Activated naive CD4-positive, alpha-beta T cell treated with anti-CD3 and anti-CD28 coated beads for 36 hours (primary cell): ENCODE measurements at regions of chr4 and their contacts with region 1.

Region 1: GRCh38 chr4:16264798-16265197 is 38.5 kb upstream of the TAPT1 start:
- DNase-seq: no peak
- H3K4me3 Mint-ChIP-seq: no peak overlapping the region
- H3K27ac Mint-ChIP-seq: no peak overlapping the region
- H3K4me1 Mint-ChIP-seq: peaks cover 5% of the 10 kb centered on the region
- H3K27me3 Mint-ChIP-seq: no peaks in the 10 kb centered on the region

Region 2: DNA sequence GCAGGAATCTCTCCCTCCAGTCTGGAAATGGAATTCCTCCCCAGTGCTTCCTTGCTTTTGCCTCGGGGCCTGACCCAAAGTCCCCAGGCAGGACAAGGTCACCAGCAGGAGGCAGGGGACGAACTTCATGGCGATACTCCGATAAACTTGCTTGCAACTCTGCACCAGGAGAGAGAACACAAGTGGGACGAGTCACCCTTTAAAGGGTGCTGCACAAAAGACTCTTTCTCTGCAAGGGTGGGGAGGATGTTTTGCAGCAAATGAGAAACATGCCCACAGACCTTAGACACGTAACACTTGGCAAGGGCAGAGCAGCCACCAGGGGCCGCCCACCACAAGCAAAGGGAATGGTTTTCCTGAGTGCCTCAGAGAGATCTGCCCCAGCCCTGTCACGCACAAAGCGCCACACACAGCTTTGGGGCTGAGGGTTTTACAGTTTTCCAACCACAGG is 301.8 kb before region 1 on chr4 and contains the start of gene FGFBP2:
- CTCF ChIA-PET with region 1: interaction called, 4 read pairs
- intact Hi-C with region 1: loop called (anchors 1 kb)
- DNase-seq: peak; percentile 76
- H3K4me3 Mint-ChIP-seq: no peak within 1 kb of the TSS
- H3K27ac Mint-ChIP-seq: no peak within 1 kb of the TSS
- H3K4me1 Mint-ChIP-seq: peaks cover 11% of the 10 kb centered on the region
- H3K27me3 Mint-ChIP-seq: peaks cover 2% of the 10 kb centered on the region
- total RNA-seq, gene FGFBP2: not detected

Region 3: DNA sequence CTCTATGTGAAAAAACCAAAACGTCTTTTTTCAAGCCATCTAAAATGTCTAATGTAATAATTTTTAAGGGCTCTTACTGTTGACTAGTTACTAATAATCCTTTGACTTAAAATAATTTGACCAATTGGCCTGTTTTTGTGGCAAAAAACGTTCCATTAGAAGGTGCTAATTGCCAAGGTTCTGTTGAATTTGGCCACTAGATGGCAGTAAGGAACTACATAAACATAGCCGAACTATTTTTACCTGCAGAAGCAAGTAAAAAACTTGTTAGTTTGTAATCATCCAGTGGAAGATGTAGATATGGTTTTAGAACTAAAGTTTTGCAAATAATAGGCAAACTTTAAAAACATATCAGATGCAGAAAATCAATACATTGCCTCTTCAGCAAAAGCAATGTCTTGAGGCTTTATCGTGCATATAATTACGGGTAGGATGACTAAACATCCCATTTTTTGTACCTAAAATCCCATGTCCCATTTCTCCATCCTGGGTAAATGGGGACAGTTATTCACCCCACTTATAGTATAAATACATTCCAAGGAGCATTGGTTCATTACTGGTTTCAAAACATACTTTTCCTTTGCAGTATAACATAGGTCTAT is 238.5 kb before region 1 on chr4:
- CTCF ChIA-PET with region 1: interaction called, 24 read pairs
- intact Hi-C with region 1: loop called (anchors 1 kb)
- DNase-seq: peak; percentile 26
- H3K4me3 Mint-ChIP-seq: no peak overlapping the region
- H3K27ac Mint-ChIP-seq: no peak overlapping the region
- H3K4me1 Mint-ChIP-seq: no peaks in the 10 kb centered on the region
- H3K27me3 Mint-ChIP-seq: peaks cover 13% of the 10 kb centered on the region

Region 4: GRCh38 chr4:16031546-16032395 is 233.0 kb before region 1 on chr4:
- CTCF ChIA-PET with region 1: interaction called, 24 read pairs
- intact Hi-C with region 1: loop called (anchors 1 kb)
- DNase-seq: no peak
- H3K4me3 Mint-ChIP-seq: no peak overlapping the region
- H3K27ac Mint-ChIP-seq: no peak overlapping the region
- H3K4me1 Mint-ChIP-seq: no peaks in the 10 kb centered on the region
- H3K27me3 Mint-ChIP-seq: peaks cover 5% of the 10 kb centered on the region

Region 5: GRCh38 chr4:16082426-16083240 is 182.2 kb before region 1 on chr4:
- CTCF ChIA-PET with region 1: interaction called, 5 read pairs
- intact Hi-C with region 1: loop called (anchors 5 kb)
- DNase-seq: peak; percentile 28
- H3K4me3 Mint-ChIP-seq: peak overlapping the region; percentile 60
- H3K27ac Mint-ChIP-seq: no peak overlapping the region
- H3K4me1 Mint-ChIP-seq: peaks cover 22% of the 10 kb centered on the region
- H3K27me3 Mint-ChIP-seq: peaks cover 74% of the 10 kb centered on the region

Region 6: GRCh38 chr4:16196478-16197393 is 68.1 kb before region 1 on chr4:
- CTCF ChIA-PET with region 1: interaction called, 13 read pairs
- intact Hi-C with region 1: loop called (anchors 1 kb)
- DNase-seq: no peak
- H3K4me3 Mint-ChIP-seq: no peak overlapping the region
- H3K27ac Mint-ChIP-seq: no peak overlapping the region
- H3K4me1 Mint-ChIP-seq: peaks cover 29% of the 10 kb centered on the region
- H3K27me3 Mint-ChIP-seq: no peaks in the 10 kb centered on the region